Left colon (tissue), 2 donors: ENCODE measurements at regions of chr6 and their contacts with region 1.

Region 1: GRCh38 chr6:109705258-109705657 is 14.2 kb downstream of the FIG4 start:
- DNase-seq: peak; percentile 64 to 83
- ATAC-seq: peak; percentile 98

Region 2: DNA sequence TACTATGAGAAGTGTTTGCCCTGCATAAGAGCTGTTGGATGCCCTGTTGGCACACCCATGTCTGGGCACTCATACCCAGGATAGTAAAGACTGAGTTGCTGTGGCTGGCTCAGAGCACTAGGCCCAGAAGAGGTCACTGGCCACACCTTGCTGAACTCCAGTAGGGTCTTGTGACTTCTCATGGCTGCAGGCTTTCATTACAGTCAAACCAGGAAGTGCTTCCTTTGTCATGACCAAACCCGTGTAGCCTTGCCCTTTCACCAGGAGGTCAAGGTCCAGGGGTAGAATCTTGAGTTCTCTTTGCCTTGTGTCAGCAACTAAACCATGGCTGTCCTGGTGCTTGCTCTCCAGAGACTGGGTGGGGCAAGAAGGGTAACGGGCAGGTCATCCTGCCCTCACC is 372.5 kb before region 1 on chr6:
- intact Hi-C with region 1: no loop called
- DNase-seq: peak; percentile 60 to 78
- ATAC-seq: peak; percentile 77

Region 3: DNA sequence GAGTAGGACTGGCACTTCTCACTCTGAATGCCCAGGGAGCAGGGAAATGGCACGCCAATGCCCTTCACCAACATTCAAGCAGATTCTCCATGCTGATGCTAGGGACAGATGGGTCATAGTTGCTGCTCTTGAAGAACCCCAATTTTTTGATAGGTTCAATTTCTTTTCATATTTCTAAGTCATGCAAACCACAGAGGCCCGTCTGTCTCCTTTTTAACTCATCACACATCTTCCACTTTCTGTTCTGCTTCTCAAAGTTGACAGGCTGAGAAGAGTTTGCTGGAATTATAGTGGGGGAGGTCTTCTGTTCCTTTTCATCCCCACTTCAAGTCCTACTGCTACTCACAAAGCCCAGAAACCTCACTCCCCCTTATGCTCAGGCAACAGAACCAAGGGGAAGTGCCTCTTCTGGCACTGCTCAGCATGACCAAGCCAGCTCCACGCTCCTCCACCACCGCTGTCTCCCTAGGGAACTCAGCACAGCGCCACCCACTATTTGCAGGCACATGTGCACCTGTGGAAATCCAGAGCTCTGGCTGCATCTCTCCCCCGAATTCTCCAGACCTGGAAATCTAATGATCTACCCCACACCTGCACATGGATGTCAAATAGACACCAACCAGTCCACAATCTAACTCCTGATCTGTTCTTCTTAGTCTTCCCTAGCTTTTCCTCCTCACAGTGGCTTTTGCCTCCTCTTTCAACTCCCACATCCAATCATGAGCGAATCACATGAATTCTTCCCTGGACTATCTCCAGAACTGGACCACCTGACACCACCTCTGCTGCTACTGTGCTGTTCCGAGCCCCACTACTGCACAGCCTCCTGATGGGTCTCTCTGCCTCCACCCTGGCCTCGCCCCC is 232.9 kb before region 1 on chr6:
- intact Hi-C with region 1: no loop called
- DNase-seq: no peak
- ATAC-seq: no peak

Region 4: GRCh38 chr6:109853426-109853825 is 148.2 kb after region 1 on chr6:
- intact Hi-C with region 1: no loop called
- DNase-seq: no peak
- ATAC-seq: no peak

Region 5: GRCh38 chr6:110039364-110039980 is 334.2 kb after region 1 on chr6:
- intact Hi-C with region 1: loop called (anchors 5 to 10 kb)
- DNase-seq: peak; percentile 78 to 91
- ATAC-seq: peak; percentile 98

Region 6: GRCh38 chr6:110398778-110399177 is 693.5 kb after region 1 on chr6:
- intact Hi-C with region 1: loop called in 1 of 2 experiments (anchors 10 kb)
- DNase-seq: no peak
- ATAC-seq: no peak

Region 7: GRCh38 chr6:110971468-110971867 is 1266.2 kb after region 1 on chr6:
- intact Hi-C with region 1: no loop called
- DNase-seq: no peak
- ATAC-seq: no peak